Left ventricle myocardium superior (tissue), 1 donor: ENCODE measurements at regions of chr20 and their contacts with region 1.

Region 1: GRCh38 chr20:47392015-47392720 is 35.7 kb upstream of the ZMYND8 start:
- DNase-seq: no peak
- ATAC-seq: peak; percentile 67

Region 2: DNA sequence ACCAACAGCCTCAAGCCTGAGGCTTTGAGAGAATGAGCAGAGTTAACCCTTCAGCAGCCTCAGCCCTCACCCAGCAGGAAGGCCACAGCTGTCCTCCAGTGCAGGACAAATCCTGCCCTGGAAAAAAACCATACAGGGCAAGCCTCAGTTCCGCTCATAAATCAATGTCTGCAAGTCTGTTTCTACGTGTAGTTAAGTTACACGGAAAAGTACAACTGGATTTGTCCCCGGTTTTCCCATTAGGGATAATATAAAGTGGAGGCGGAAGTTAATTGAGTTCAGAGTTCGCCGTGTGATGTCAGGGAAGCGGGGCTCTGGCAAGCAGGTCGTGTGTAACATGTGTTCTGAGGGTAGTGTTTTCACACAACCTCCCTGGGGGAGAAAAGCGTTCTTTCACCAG is 541.8 kb before region 1 on chr20:
- intact Hi-C with region 1: no loop called
- DNase-seq: no peak
- ATAC-seq: no peak

Region 3: DNA sequence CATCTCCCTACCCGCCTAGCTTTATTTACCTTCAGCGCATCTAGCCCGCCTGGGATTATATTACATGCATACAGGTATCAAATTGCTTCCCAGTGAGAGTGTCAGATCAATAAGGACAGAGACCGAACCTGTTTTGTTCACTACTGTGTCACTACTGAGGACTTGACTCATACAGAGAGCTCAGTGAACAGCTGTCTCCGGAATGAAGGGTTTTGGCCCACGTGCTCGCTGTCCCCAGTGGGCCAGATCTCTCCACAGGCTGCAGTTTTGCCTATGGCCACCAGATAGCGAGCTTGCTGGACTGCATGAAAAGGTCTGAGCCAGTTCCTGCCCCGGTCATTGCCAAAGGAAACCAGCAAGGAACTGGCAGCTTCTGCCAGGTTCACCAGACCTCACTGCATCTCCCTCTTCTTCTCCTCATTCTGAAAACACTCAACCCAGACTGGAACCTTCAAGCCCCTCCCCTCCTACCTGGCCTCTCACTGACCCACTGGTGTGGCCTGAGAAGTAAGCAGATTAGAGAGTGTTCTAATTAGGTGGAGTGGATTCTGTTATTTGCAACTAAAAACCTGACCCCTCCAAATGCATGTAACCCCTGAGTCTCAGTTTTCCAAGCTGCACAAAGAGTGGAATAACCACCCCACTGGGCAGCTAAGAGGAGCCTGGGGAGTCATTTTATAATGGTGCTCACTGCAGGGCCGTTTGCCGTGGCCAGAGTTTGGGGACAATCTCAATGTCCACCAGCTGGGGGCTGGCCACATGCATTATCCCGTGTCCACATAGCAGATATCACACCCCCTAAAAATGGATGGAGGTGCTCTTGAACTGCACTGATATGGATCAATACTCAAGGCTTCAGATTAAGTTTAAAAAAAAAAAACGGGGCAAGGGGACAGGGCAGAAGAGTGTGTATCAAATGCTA is 186.3 kb before region 1 on chr20:
- intact Hi-C with region 1: loop called (anchors 10 kb)
- DNase-seq: peak; percentile 85
- ATAC-seq: peak; percentile 80

Region 4: GRCh38 chr20:47305667-47306066 is 86.5 kb before region 1 on chr20:
- intact Hi-C with region 1: no loop called
- DNase-seq: no peak
- ATAC-seq: no peak

Region 5: GRCh38 chr20:47466704-47467434 is 74.7 kb after region 1 on chr20:
- intact Hi-C with region 1: loop called (anchors 2 kb)
- DNase-seq: no peak
- ATAC-seq: no peak

Region 6: GRCh38 chr20:47561180-47561579 is 169.0 kb after region 1 on chr20:
- intact Hi-C with region 1: no loop called
- DNase-seq: no peak
- ATAC-seq: peak; percentile 47

Region 7: DNA sequence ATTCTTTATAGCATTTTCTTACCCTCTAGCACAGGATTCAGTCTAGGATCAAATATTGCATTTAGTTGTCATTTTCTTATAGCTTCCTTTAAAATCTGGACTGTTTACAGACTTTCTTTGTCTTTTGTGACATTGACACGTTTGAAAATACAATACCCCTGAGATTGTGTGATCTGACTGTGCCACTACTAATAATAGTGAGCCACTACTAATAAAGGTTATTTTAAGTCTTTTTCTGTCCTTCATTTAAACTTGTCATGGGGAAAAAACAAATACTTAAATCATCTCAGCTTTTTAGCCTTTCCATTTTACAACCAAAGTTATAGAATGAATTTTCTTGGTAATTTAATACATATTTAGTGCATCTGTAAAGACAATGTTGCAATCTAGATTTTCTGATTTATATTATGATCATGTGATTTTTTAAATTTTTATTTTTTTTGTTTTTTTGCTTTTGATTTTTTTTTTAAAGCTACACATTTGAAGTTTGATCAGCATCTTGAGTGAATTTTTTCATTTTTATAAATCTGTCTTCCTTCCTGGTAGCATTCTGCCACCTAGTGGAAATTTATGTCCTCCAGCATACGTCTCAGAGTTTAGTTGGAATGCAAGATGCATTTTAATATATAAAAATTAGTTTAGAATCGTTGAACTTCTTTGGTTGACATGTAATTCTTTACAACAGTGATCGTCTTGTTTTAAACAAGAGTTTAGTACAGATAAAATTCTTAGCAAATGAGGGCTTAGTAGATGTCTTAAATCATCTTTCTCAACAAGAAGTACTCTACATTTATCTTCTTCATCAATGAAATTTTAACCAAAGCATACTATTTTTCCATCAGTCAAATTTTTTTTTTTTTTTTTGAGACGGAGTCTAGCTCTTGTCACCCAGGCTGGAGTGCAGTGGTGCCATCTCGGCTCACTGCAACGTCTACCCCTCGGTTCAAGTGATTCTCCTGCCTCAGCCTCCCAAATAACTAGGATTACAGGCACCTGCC is 228.9 kb after region 1 on chr20:
- intact Hi-C with region 1: loop called (anchors 10 kb)
- DNase-seq: no peak
- ATAC-seq: peak; percentile 47